Activated CD8-positive, alpha-beta T cell treated with anti-CD3 and anti-CD28 coated beads, Interleukin-2, amount 10 ng/mL, durations not matched to agents 7 days and 5 days (primary cell): ENCODE measurements at regions of chr1 and their contacts with region 1.

Region 1: GRCh38 chr1:5514519-5515183 is 477.6 kb downstream of the NPHP4 start:
- DNase-seq: peak; percentile 70
- ATAC-seq: peak; percentile 84
- H3K4me3 Mint-ChIP-seq: no peak overlapping the region
- H3K27ac Mint-ChIP-seq: no peak overlapping the region
- H3K4me1 Mint-ChIP-seq: no peaks in the 10 kb centered on the region
- H3K27me3 Mint-ChIP-seq: no peaks in the 10 kb centered on the region

Region 2: DNA sequence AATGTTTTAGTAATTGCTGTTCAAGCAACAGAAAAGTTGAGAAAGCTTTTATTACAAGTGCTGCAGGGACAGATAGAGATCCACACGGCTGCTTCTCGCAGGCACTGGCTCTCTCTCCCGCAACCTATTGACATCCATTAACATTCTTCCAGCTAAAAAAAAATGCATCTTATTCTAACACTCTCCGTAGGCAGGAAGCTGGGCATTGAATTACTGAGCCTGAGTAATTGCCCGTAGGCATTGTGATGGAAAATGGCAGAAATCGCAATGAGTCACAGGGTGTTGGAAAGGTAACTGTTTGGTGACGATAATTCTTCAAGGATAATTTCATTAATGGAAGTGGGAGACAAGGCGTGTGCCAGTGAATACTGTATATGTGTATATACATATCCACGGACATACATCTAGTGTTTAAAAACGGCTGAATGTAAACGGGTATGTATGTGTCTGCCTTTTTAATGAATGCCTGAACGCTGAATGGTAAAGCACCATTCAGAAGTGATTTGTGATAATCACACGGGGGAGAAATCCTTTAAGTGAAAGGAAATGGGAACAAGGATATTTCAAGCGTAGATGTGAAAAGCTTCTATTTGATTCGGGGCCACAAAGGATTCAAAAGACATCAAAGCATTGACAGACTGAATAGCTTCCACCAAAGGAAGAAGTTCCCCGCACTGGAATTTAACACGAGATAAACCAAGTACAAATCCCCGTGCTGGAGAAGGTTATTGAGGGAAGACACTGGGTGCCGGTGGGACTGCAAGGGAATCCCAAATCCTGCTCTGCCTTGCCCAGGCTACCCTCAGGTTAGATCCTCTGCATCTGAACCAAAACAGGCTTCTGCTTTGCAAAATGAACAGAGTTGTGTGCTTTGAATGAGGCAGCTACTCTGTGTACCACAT is 89.6 kb before region 1 on chr1:
- CTCF ChIA-PET with region 1: no interaction called
- POLR2A ChIA-PET with region 1: no interaction called
- DNase-seq: no peak
- ATAC-seq: no peak
- H3K4me3 Mint-ChIP-seq: no peak overlapping the region
- H3K27ac Mint-ChIP-seq: no peak overlapping the region
- H3K4me1 Mint-ChIP-seq: peaks cover 20% of the 10 kb centered on the region
- H3K27me3 Mint-ChIP-seq: peaks cover 41% of the 10 kb centered on the region

Region 3: DNA sequence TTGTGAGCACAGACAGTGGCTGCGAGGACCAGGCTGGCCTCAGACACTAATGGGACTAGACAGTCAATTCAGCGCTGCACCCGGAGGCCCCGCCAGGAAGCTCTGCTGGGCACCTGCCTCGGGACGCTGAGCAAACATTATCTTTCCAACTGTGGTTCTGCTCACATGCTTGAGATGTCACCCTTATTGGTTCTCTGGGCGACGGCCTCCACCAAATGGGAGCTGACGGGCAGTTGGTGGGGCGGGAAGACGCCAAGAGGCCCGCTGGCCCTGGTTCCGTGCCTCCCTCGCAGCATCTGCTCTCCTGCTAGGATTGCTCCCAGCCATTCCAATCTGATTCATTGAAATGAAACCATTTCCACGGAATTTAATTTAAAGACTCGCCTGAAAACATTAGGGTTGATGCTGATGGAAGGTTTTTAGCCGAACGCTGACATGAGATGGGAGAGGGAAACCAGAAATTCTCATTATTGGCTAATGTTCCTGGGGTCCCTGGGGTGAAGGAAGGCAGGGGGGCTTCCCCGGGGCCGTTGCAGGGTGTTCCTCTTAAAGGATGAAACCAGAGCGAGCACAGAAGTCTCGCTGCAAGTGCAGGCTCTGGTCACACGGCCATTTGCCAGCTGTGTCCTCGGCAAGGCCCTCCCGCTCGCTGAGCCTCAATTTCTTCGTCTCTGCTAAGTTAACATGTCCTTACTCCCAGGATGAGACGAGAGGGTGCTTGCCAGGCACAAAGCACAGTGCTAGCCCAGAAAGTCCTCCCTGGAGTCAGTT is 34.6 kb before region 1 on chr1:
- CTCF ChIA-PET with region 1: no interaction called
- POLR2A ChIA-PET with region 1: no interaction called
- DNase-seq: no peak
- ATAC-seq: no peak
- H3K4me3 Mint-ChIP-seq: no peak overlapping the region
- H3K27ac Mint-ChIP-seq: no peak overlapping the region
- H3K4me1 Mint-ChIP-seq: peaks cover 4% of the 10 kb centered on the region
- H3K27me3 Mint-ChIP-seq: no peaks in the 10 kb centered on the region

Region 4: GRCh38 chr1:5490635-5491034 is 24.0 kb before region 1 on chr1:
- CTCF ChIA-PET with region 1: interaction called, 11 read pairs
- POLR2A ChIA-PET with region 1: no interaction called
- DNase-seq: no peak
- ATAC-seq: no peak
- H3K4me3 Mint-ChIP-seq: no peak overlapping the region
- H3K27ac Mint-ChIP-seq: no peak overlapping the region
- H3K4me1 Mint-ChIP-seq: no peaks in the 10 kb centered on the region
- H3K27me3 Mint-ChIP-seq: peaks cover 4% of the 10 kb centered on the region

Region 5: GRCh38 chr1:5745776-5746610 is 231.3 kb after region 1 on chr1:
- CTCF ChIA-PET with region 1: interaction called, 12 read pairs
- POLR2A ChIA-PET with region 1: no interaction called
- DNase-seq: peak; percentile 66
- ATAC-seq: peak; percentile 77
- H3K4me3 Mint-ChIP-seq: no peak overlapping the region
- H3K27ac Mint-ChIP-seq: no peak overlapping the region
- H3K4me1 Mint-ChIP-seq: no peaks in the 10 kb centered on the region
- H3K27me3 Mint-ChIP-seq: peaks cover 3% of the 10 kb centered on the region

Region 6: GRCh38 chr1:5758000-5758858 is 243.6 kb after region 1 on chr1:
- CTCF ChIA-PET with region 1: no interaction called
- POLR2A ChIA-PET with region 1: no interaction called
- DNase-seq: no peak
- ATAC-seq: no peak
- H3K4me3 Mint-ChIP-seq: no peak overlapping the region
- H3K27ac Mint-ChIP-seq: no peak overlapping the region
- H3K4me1 Mint-ChIP-seq: no peaks in the 10 kb centered on the region
- H3K27me3 Mint-ChIP-seq: no peaks in the 10 kb centered on the region